ENCODE measurements at regions of chr11 and their contacts with region 1.

Region 1: DNA sequence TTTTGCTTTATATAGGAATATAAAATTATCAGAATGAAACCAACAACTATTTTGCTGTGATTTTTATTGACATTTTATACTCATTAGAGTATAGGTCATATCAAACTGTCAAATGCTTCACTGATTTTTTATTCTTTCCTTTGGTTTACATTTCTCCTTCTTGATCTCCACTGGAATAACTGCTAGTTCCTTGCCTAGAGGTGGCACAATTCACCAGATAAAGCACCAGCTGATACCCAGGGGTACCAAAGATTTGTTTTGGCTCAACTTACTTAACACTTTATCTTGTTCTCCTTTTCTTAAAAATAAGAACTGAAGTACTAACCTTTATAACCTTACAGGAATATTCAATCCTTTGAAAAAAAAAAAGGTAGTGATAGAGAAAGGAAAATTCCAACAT is 725.1 kb upstream of the CHORDC1 start:
- DNase-seq: no peak
- ATAC-seq: no peak
- H3K4me3 ChIP-seq: no peak overlapping the region
- H3K27ac ChIP-seq: no peak overlapping the region
- H3K4me1 ChIP-seq: no peaks in the 10 kb centered on the region
- H3K27me3 ChIP-seq: no peaks in the 10 kb centered on the region
- CTCF ChIP-seq: no peak
- POLR2A ChIP-seq: no peak
- RAD21 ChIP-seq: peak; percentile 7; the same call in 1 of the 2 replicates

Region 2: GRCh38 chr11:90468923-90469322 is 479.0 kb before region 1 on chr11:
- CTCF ChIA-PET with region 1: no interaction called
- POLR2A ChIA-PET with region 1: no interaction called
- dilution Hi-C with region 1: no loop called
- in situ Hi-C with region 1: no loop called
- intact Hi-C with region 1: loop called (anchors 5 kb)
- DNase-seq: no peak
- ATAC-seq: no peak
- H3K4me3 ChIP-seq: no peak overlapping the region
- H3K27ac ChIP-seq: no peak overlapping the region
- H3K4me1 ChIP-seq: no peaks in the 10 kb centered on the region
- H3K27me3 ChIP-seq: no peaks in the 10 kb centered on the region
- CTCF ChIP-seq: no peak
- POLR2A ChIP-seq: no peak
- RAD21 ChIP-seq: no peak

Region 3: DNA sequence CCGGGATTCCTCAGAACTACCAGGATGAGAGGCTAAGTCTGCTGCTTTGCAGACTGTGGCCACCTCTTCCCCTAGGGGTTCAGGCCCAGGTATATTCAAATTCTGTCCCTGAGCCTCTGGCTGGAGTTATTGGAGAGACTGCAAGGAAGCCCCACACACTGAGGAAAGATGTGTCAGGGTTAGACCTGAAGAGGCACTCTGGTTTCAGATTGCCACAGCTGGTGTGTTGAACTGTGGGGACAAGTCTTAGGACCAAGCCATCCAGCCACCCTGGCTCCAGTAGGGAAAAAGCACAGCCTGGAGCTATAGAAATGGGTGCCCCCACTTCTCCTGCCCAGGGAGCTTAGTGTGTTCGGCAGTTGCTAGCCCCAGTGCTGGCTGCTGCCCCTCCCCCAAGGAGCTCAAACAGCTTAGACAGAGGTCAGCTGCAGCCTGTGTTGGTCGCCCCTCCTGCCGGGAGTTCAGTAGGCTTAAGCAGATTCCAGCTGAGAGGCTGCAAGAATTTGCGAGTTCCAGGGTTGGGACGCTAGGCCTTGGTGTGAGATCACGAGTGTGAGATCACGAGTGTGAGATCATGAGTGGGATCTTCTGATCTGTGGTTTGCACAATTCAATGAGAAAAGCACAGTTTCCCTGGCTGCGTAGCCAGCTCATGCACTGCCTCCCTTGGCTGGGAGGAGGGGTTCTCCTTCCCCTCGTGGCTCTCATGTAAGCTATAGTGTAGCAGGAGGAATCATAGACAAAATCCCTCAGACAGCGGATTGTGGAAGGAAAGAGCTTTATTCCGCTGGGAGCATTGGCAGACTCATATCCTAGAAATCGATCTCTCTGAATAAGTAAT is 173.0 kb before region 1 on chr11:
- CTCF ChIA-PET with region 1: no interaction called
- POLR2A ChIA-PET with region 1: no interaction called
- dilution Hi-C with region 1: no loop called
- in situ Hi-C with region 1: no loop called
- intact Hi-C with region 1: no loop called
- DNase-seq: no peak
- ATAC-seq: no peak
- H3K4me3 ChIP-seq: no peak overlapping the region
- H3K27ac ChIP-seq: no peak overlapping the region
- H3K4me1 ChIP-seq: no peaks in the 10 kb centered on the region
- H3K27me3 ChIP-seq: no peaks in the 10 kb centered on the region
- CTCF ChIP-seq: no peak
- POLR2A ChIP-seq: no peak
- RAD21 ChIP-seq: no peak

Measured in IMR-90 (cell line).